ENCODE measurements at regions of chr11 and their contacts with region 1.

Region 1: GRCh38 chr11:102007567-102008437 is 39.4 kb upstream of the CFAP300 start:
- DNase-seq: peak; percentile 46 to 99
- H3K4me3 ChIP-seq: 0 out of 2 replicates have a peak overlapping the region, but pooled peaks have one; percentile 6
- H3K27ac ChIP-seq: peak overlapping the region; percentile 90
- H3K4me1 ChIP-seq: peaks cover 68% of the 10 kb centered on the region
- H3K27me3 ChIP-seq: no peaks in the 10 kb centered on the region
- CTCF ChIP-seq: peak; percentile 88

Region 2: DNA sequence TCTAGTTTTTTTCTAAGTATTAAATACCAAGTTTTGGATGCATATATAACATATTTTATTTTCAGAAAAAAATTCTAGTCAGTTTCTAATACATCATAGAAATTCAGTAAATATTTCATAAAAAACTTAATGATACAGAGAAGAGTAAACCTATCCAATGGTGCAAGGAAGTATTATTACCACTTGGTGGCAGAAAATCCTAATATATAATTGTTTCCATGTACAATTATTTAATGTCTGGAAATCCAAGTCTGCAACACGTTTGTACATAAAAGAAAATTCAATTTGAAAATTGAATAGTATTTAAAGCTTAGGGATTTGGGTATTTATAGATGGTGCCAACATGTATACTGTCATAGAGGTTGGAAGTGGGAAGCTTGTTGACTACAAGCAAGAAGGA is 551.0 kb before region 1 on chr11:
- CTCF ChIA-PET with region 1: no interaction called
- POLR2A ChIA-PET with region 1: no interaction called
- intact Hi-C with region 1: loop called (anchors 10 kb)
- DNase-seq: no peak
- H3K4me3 ChIP-seq: no peak overlapping the region
- H3K27ac ChIP-seq: no peak overlapping the region
- H3K4me1 ChIP-seq: no peaks in the 10 kb centered on the region
- H3K27me3 ChIP-seq: no peaks in the 10 kb centered on the region
- CTCF ChIP-seq: peak; percentile 77

Region 3: GRCh38 chr11:101860696-101861427 is 146.9 kb before region 1 on chr11:
- CTCF ChIA-PET with region 1: interaction called, 20 read pairs
- POLR2A ChIA-PET with region 1: no interaction called
- intact Hi-C with region 1: loop called (anchors 1 kb)
- DNase-seq: peak; percentile 30 to 68
- H3K4me3 ChIP-seq: no peak overlapping the region
- H3K27ac ChIP-seq: no peak overlapping the region
- H3K4me1 ChIP-seq: peaks cover 20% of the 10 kb centered on the region
- H3K27me3 ChIP-seq: no peaks in the 10 kb centered on the region
- CTCF ChIP-seq: peak; percentile 89

Region 4: DNA sequence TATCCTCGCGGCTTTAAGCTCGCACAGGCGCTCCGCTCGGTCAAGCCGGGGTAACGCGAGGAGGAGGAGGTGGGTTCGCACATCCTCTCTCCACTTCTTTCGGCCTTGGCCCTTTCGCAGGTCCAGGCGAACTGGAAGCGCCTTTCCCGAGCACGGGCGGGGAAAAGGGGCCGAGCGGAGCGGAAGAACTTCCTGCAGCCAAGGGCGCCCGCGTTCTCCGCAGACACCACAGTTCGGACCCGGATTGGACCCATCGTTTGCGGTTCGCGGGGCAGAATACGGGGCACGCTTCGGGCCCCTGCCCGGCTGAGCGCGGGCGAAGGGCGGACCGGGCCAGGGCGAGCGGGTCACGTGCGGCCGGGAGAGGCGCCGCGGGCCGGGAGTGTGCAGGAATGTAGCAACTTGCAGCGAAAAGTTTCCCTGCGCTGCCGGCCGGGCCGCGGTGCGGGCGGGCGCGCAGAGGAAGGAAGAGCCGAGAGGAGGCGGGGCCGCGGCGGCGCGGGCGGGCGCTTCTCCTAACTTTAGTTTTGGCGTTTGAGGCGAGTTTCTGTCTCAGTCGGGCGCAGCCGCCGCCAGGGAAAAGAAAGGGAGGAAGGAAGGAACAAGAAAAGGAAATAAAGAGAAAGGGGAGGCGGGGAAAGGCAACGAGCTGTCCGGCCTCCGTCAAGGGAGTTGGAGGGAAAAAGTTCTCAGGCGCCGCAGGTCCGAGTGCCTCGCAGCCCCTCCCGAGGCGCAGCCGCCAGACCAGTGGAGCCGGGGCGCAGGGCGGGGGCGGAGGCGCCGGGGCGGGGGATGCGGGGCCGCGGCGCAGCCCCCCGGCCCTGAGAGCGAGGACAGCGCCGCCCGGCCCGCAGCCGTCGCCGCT is 102.3 kb after region 1 on chr11 and contains the start of gene YAP1:
- CTCF ChIA-PET with region 1: interaction called, 6 read pairs
- POLR2A ChIA-PET with region 1: no interaction called
- intact Hi-C with region 1: loop called (anchors 1 kb)
- DNase-seq: peak; percentile 80 to 90
- H3K4me3 ChIP-seq: peak within 1 kb of the TSS; percentile 72
- H3K27ac ChIP-seq: peak within 1 kb of the TSS; percentile 96
- H3K4me1 ChIP-seq: peaks cover 38% of the 10 kb centered on the region
- H3K27me3 ChIP-seq: no peaks in the 10 kb centered on the region
- CTCF ChIP-seq: no peak
- total RNA-seq, gene YAP1: 101 and 111 TPM in 2 replicates

Region 5: GRCh38 chr11:102157219-102157618 is 149.4 kb after region 1 on chr11:
- CTCF ChIA-PET with region 1: no interaction called
- POLR2A ChIA-PET with region 1: no interaction called
- intact Hi-C with region 1: no loop called
- DNase-seq: peak; percentile 15 to 58
- H3K4me3 ChIP-seq: no peak overlapping the region
- H3K27ac ChIP-seq: peak overlapping the region; percentile 81
- H3K4me1 ChIP-seq: peaks cover 64% of the 10 kb centered on the region
- H3K27me3 ChIP-seq: no peaks in the 10 kb centered on the region
- CTCF ChIP-seq: no peak

Region 6: DNA sequence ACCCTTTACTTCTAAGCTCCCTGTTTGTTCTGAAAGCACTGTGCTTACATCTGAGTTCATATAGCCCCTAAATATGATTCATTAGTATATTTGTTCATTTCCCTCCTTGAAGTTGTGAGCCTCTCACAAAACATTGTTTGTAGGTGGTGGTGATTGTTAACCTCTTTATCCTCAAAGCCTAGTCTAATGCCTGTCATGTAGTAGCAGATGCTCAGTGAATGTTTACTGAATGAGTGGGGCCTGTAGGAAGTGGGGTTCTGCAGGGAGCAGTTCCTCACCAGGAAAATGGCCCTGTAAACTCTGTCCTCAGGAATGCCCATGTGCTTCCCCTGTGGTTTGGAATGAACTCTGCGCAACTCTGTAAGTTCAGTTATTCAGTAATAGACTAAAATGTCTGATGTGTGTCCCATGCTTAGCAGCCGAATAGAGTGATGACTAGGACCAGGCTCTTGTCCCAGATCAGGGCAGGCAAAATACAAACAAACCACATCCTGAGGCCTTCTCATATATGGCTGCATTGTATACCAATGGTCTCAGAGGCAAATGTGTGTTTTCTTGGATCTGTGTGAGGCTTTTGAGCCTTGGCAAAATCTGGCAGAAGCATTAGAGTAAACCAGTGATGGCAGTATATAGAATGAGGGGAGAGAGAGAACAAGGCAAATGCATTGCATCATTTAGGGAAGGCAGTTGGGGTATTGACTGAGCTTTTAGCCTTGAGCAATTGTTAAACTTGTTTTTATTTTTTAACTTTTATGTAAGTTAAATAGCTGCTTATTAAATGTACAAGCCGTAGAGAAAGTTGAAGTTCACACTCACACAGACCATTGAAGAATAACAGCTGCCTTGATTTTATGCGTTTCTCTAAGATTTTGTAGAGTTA is 218.1 kb after region 1 on chr11:
- CTCF ChIA-PET with region 1: no interaction called
- POLR2A ChIA-PET with region 1: no interaction called
- intact Hi-C with region 1: loop called (anchors 1 kb)
- DNase-seq: peak; percentile 8 to 52
- H3K4me3 ChIP-seq: 0 out of 2 replicates have a peak overlapping the region, but pooled peaks have one; percentile 15
- H3K27ac ChIP-seq: peak overlapping the region; percentile 59
- H3K4me1 ChIP-seq: peaks cover 59% of the 10 kb centered on the region
- H3K27me3 ChIP-seq: no peaks in the 10 kb centered on the region
- CTCF ChIP-seq: no peak

Region 7: GRCh38 chr11:102361086-102362031 is 353.6 kb after region 1 on chr11:
- CTCF ChIA-PET with region 1: no interaction called
- POLR2A ChIA-PET with region 1: no interaction called
- intact Hi-C with region 1: no loop called
- DNase-seq: no peak
- H3K4me3 ChIP-seq: no peak overlapping the region; the same call in 1 of the 2 replicates
- H3K27ac ChIP-seq: no peak overlapping the region
- H3K4me1 ChIP-seq: no peaks in the 10 kb centered on the region
- H3K27me3 ChIP-seq: no peaks in the 10 kb centered on the region
- CTCF ChIP-seq: no peak

Measured in PC-9 (cell line).